ENCODE measurements at regions of chr4 and their contacts with region 1.

Region 1: GRCh38 chr4:143773998-143774895 is 73.8 kb upstream of the FREM3 start:
- DNase-seq: peak; percentile 63
- H3K4me3 Mint-ChIP-seq: no peak overlapping the region
- H3K27ac Mint-ChIP-seq: no peak overlapping the region
- H3K4me1 Mint-ChIP-seq: no peaks in the 10 kb centered on the region
- H3K27me3 Mint-ChIP-seq: no peaks in the 10 kb centered on the region
- CTCF ChIP-seq: peak; percentile 57

Region 2: GRCh38 chr4:143554728-143555597 is 219.3 kb before region 1 on chr4:
- CTCF ChIA-PET with region 1: no interaction called
- intact Hi-C with region 1: no loop called
- DNase-seq: no peak
- H3K4me3 Mint-ChIP-seq: no peak overlapping the region
- H3K27ac Mint-ChIP-seq: no peak overlapping the region
- H3K4me1 Mint-ChIP-seq: no peaks in the 10 kb centered on the region
- H3K27me3 Mint-ChIP-seq: no peaks in the 10 kb centered on the region
- CTCF ChIP-seq: no peak

Region 3: GRCh38 chr4:143986180-143986579 is 211.9 kb after region 1 on chr4:
- CTCF ChIA-PET with region 1: no interaction called
- intact Hi-C with region 1: loop called (anchors 2 kb)
- DNase-seq: no peak
- H3K4me3 Mint-ChIP-seq: no peak overlapping the region
- H3K27ac Mint-ChIP-seq: no peak overlapping the region
- H3K4me1 Mint-ChIP-seq: peaks cover 7% of the 10 kb centered on the region
- H3K27me3 Mint-ChIP-seq: no peaks in the 10 kb centered on the region
- CTCF ChIP-seq: no peak

Region 4: GRCh38 chr4:144014808-144015207 is 240.6 kb after region 1 on chr4:
- CTCF ChIA-PET with region 1: no interaction called
- intact Hi-C with region 1: loop called (anchors 5 kb)
- DNase-seq: no peak
- H3K4me3 Mint-ChIP-seq: no peak overlapping the region
- H3K27ac Mint-ChIP-seq: no peak overlapping the region
- H3K4me1 Mint-ChIP-seq: no peaks in the 10 kb centered on the region
- H3K27me3 Mint-ChIP-seq: no peaks in the 10 kb centered on the region
- CTCF ChIP-seq: no peak

Region 5: DNA sequence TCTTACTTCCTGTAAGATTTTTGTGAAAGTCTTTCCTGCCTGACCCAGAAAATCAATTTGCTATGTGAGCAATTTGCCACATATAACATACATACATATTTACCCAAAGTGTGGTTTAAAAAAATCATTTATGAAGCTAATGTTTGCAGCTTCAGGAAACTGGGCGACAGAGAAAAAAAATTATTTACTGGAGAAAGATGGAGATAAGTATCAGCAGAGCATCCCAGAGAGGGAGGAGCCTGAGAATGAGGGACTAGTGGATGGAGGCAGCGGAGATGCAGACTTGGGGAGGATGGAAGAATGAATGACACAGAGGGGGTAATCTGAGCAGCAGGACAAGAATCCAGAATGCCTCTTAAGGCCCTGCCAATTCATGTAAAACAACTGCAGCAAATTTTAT is 367.2 kb after region 1 on chr4:
- CTCF ChIA-PET with region 1: no interaction called
- intact Hi-C with region 1: loop called (anchors 5 kb)
- DNase-seq: no peak
- H3K4me3 Mint-ChIP-seq: no peak overlapping the region
- H3K27ac Mint-ChIP-seq: no peak overlapping the region
- H3K4me1 Mint-ChIP-seq: no peaks in the 10 kb centered on the region
- H3K27me3 Mint-ChIP-seq: peaks cover 12% of the 10 kb centered on the region
- CTCF ChIP-seq: no peak